Calu3 (cell line): ENCODE measurements at regions of chr2 and their contacts with region 1.

Region 1: DNA sequence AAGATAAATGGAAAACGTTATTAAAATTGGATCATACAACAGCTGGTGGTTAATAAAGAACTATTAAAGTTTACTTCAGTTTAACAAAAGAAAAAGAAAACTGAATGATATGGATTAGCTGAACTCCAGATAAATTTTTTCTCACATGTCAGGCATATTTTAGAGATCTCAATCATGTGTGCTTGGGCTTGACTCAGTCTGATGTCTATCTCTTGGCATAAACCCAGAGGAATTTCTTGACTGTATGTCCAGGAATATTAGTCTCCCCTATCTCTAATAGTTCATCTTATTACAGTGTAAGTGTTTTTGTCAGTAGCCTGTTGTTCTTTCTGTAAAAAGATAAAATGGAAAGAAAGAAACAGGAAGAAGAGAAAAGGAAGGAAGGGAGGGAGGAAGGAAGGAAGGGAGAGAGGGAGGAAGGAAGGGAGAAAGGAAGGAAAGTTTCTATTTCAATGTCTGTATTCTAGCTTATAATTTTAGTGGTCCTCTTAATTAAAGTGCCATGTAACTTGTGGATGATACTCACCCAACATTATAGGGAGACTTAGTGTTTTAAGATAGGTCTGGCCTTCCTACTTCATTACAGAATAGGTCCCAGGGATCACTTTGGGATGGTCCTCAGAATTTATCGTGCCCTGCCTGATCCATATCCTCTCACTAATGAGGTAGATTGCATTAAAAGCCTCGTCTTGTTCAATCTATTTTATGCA is 99.7 kb upstream of the UGP2 start:
- DNase-seq: no peak
- H3K4me3 Mint-ChIP-seq: no peak overlapping the region
- H3K27ac Mint-ChIP-seq: no peak overlapping the region
- H3K4me1 Mint-ChIP-seq: peaks cover 39% of the 10 kb centered on the region
- H3K27me3 Mint-ChIP-seq: no peaks in the 10 kb centered on the region
- CTCF ChIP-seq: no peak

Region 2: GRCh38 chr2:62505750-62506420 is 1236.1 kb before region 1 on chr2 and contains the start of gene TMEM17:
- CTCF ChIA-PET with region 1: no interaction called
- intact Hi-C with region 1: no loop called
- DNase-seq: peak; percentile 89
- H3K4me3 Mint-ChIP-seq: peak within 1 kb of the TSS; percentile 72
- H3K27ac Mint-ChIP-seq: peak within 1 kb of the TSS; percentile 73
- H3K4me1 Mint-ChIP-seq: peaks cover 23% of the 10 kb centered on the region
- H3K27me3 Mint-ChIP-seq: no peaks in the 10 kb centered on the region
- CTCF ChIP-seq: no peak
- total RNA-seq, gene TMEM17: 3.3 and 3.6 TPM in 2 replicates

Region 3: DNA sequence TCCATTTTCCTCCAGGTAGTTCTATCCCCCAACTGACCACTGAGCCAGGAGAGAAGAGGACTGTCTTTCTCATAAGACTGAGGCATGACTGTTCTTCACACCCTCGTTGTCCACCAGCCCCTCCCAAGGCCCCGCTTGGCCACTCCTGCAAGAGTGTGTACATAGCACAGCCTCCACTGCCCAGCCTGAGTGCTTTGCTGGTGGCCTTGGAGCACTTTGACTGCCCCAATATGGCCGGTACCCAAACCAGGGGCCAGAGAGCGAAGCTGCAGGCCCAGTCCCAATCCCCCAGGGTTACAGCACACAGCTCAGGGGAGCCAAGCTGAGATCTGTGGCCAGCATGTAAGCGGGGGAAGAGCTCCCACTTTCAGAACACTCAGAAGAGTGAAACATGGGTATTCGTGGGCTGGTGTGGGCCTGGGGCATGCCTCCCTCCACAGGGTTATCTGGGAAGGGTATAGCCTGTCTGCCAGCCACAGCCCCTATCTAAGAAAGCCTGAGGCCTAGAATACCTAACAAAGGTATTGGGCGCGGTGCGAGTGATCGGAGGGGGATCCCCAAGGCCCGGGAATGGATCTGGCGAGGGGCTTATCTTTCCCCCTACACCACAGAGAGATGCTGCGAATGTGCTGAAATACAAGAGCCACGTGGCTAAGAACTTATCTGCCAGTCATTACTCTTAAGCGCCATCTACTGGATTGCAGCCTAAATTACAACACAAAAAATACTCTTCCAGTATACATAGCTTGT is 317.5 kb before region 1 on chr2:
- CTCF ChIA-PET with region 1: no interaction called
- intact Hi-C with region 1: no loop called
- DNase-seq: no peak
- H3K4me3 Mint-ChIP-seq: no peak overlapping the region
- H3K27ac Mint-ChIP-seq: no peak overlapping the region
- H3K4me1 Mint-ChIP-seq: no peaks in the 10 kb centered on the region
- H3K27me3 Mint-ChIP-seq: no peaks in the 10 kb centered on the region
- CTCF ChIP-seq: peak; percentile 43

Region 4: GRCh38 chr2:63841254-63842022 is 99.4 kb after region 1 on chr2 and contains the start of gene UGP2:
- CTCF ChIA-PET with region 1: interaction called, 5 read pairs
- intact Hi-C with region 1: loop called (anchors 5 kb)
- DNase-seq: peak; percentile 89
- H3K4me3 Mint-ChIP-seq: peak within 1 kb of the TSS; percentile 91
- H3K27ac Mint-ChIP-seq: peak within 1 kb of the TSS; percentile 91
- H3K4me1 Mint-ChIP-seq: peaks cover 33% of the 10 kb centered on the region
- H3K27me3 Mint-ChIP-seq: no peaks in the 10 kb centered on the region
- CTCF ChIP-seq: no peak
- total RNA-seq, gene UGP2: 120 and 134 TPM in 2 replicates